ENCODE measurements at regions of chr20 and their contacts with region 1.

Region 1: DNA sequence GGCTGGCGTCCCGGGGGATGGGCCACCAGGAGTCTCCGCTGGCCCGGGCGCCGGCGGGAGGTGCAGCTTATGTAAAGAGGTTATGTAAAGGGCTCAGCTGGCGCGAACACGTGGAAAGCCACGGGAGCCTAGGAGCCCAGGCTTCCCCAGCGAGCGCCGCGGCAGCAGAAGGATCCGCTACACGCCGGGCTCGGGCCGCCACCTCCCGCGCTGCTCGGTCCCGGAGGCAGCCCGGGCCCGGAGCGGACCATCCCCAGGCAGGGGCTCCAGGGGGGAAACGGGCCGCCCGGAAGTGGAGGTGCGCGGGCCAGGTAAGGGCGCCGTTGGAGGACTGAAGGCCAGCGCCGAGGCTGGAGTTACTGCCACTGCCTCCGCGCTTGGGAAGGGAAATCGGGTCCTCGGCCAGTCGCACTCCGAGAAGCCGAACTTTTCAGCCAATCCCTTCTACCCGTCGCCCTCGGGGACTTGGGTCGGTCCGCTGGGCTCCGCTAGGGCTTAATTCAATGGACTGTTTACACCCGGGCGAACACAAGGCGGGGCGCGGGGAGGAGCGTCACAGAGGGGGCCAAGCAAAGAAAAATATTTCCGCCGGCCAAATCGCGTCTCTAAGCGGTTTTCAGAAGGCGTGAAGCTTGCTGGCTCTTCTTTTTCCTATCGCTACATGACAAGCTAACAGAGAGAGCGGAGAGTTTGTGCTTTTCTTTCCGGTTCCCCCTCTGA is 398 bp downstream of the STK35 start:
- DNase-seq: peak; percentile 71 to 90
- H3K4me3 ChIP-seq: peak overlapping the region; percentile 80 to 92 (median 88)
- H3K27ac ChIP-seq: peak overlapping the region; percentile 100
- H3K4me1 ChIP-seq: peaks cover 2 to 12% (median 6%) of the 10 kb centered on the region in 4 experiments; a peak in 6 of 7 replicates
- H3K27me3 ChIP-seq: no peaks in the 10 kb centered on the region
- CTCF ChIP-seq: peak in 1 of 3 experiments; percentile 4; a peak in 1 of 4 replicates
- EP300 ChIP-seq: peak in 1 of 2 experiments; percentile 98; a peak in 2 of 3 replicates
- POLR2A ChIP-seq: peak; percentile 83 to 91
- RAD21 ChIP-seq: no peak; a peak in 1 of 4 replicates

Region 2: DNA sequence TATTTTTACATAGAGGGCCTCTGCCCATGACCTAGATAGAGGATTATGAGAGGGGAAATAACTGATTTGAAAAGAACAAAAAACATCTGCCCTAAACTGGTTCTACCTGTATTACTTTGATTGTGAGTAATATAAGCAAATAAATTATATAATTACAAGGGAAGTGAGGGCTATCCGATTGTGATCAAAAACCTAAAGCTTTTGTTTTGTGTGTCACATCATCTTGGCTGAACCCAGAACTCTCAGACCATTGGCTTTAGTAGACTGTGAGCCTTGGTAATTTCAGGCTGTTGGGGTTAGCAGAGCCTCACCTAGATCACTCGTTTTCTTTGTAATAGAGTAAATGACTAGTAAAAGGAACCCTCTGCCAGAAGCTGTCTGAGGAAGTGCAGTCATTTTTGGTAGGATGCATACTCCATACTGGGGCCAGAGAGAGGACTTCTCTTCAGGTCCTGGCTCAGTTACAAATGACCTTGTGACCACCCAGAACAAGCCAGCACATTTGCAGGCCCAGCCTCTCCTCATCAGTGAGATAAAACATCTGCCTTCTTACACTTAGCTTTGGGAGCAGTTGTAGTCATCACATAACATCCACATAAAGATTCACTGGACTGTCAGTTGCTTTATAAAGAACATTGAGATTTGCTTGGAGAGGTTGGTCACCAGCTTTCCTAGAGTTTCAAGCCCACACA is 13.1 kb after region 1 on chr20:
- CTCF ChIA-PET with region 1: interaction called, 3 read pairs
- POLR2A ChIA-PET with region 1: interaction called, 30 read pairs
- DNase-seq: no peak
- H3K4me3 ChIP-seq: no peak overlapping the region
- H3K27ac ChIP-seq: no peak overlapping the region
- H3K4me1 ChIP-seq: no peaks in the 10 kb centered on the region
- H3K27me3 ChIP-seq: no peaks in the 10 kb centered on the region
- CTCF ChIP-seq: no peak
- EP300 ChIP-seq: no peak
- POLR2A ChIP-seq: no peak
- RAD21 ChIP-seq: no peak

Region 3: GRCh38 chr20:2122936-2123335 is 20.9 kb after region 1 on chr20:
- CTCF ChIA-PET with region 1: no interaction called
- POLR2A ChIA-PET with region 1: interaction called, 12 read pairs
- DNase-seq: no peak
- H3K4me3 ChIP-seq: no peak overlapping the region
- H3K27ac ChIP-seq: no peak overlapping the region
- H3K4me1 ChIP-seq: peaks cover 0 to 10% (median 0%) of the 10 kb centered on the region in 4 experiments; a peak in 1 of 7 replicates
- H3K27me3 ChIP-seq: no peaks in the 10 kb centered on the region
- CTCF ChIP-seq: no peak
- EP300 ChIP-seq: no peak
- POLR2A ChIP-seq: no peak
- RAD21 ChIP-seq: no peak

Region 4: GRCh38 chr20:2140561-2140960 is 38.5 kb after region 1 on chr20:
- CTCF ChIA-PET with region 1: interaction called, 6 read pairs
- POLR2A ChIA-PET with region 1: interaction called, 13 read pairs
- DNase-seq: no peak
- H3K4me3 ChIP-seq: no peak overlapping the region
- H3K27ac ChIP-seq: no peak overlapping the region
- H3K4me1 ChIP-seq: no peaks in the 10 kb centered on the region; a peak in 1 of 7 replicates
- H3K27me3 ChIP-seq: no peaks in the 10 kb centered on the region
- CTCF ChIP-seq: no peak
- EP300 ChIP-seq: no peak
- POLR2A ChIP-seq: no peak
- RAD21 ChIP-seq: no peak